WTC11 (cell line): ENCODE measurements at regions of chr3 and their contacts with region 1.

Region 1: GRCh38 chr3:131361464-131362421 is 19.8 kb upstream of the NUDT16 start:
- DNase-seq: peak; percentile 96
- ATAC-seq: peak; percentile 97
- H3K4me3 Mint-ChIP-seq: peak overlapping the region; percentile 86
- H3K27ac Mint-ChIP-seq: peak overlapping the region; percentile 97
- H3K4me1 Mint-ChIP-seq: peaks cover 27% of the 10 kb centered on the region
- H3K27me3 Mint-ChIP-seq: no peaks in the 10 kb centered on the region
- CTCF ChIP-seq: no peak

Region 2: DNA sequence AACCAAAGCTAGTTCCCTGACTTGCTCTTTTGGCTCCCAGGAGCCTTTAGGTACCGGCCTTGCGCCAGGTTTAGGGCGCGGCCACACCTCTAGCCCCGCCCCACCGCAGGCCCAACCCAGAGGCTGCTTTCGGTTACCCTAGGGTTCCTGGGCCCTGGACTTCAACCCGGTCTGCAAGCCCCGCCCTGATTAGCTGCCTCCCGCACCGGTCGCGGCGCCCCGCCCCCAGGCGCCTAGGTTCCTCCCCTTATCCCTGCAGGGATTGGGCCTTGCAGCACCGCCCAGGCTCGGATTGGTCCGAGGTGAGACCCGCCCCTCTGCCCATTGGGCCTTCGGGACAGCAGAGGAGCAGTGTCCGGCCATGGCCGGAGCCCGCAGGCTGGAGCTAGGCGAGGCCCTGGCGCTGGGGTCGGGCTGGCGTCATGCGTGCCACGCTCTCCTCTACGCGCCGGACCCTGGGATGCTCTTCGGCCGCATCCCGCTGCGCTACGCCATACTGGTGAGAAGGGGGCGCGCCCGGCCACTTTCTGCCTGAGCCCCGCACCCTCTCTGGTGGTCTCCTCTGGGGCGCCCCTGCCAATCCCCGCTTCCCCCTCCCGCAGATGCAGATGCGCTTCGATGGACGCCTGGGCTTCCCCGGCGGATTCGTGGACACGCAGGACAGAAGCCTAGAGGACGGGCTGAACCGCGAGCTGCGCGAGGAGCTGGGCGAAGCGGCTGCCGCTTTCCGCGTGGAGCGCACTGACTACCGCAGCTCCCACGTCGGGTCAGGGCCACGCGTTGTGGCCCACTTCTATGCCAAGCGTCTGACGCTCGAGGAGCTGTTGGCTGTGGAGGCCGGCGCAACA is 19.9 kb after region 1 on chr3 and contains the start of gene NUDT16:
- CTCF ChIA-PET with region 1: interaction called, 5 read pairs
- POLR2A ChIA-PET with region 1: interaction called, 31 read pairs
- DNase-seq: peak; percentile 100
- ATAC-seq: peak; percentile 97
- H3K4me3 Mint-ChIP-seq: peak within 1 kb of the TSS; percentile 94
- H3K27ac Mint-ChIP-seq: peak within 1 kb of the TSS; percentile 97
- H3K4me1 Mint-ChIP-seq: peaks cover 15% of the 10 kb centered on the region
- H3K27me3 Mint-ChIP-seq: no peaks in the 10 kb centered on the region
- CTCF ChIP-seq: no peak
- total RNA-seq, gene NUDT16: 17.2 to 20.3 TPM (median 18.6 TPM) in 3 replicates

Region 3: DNA sequence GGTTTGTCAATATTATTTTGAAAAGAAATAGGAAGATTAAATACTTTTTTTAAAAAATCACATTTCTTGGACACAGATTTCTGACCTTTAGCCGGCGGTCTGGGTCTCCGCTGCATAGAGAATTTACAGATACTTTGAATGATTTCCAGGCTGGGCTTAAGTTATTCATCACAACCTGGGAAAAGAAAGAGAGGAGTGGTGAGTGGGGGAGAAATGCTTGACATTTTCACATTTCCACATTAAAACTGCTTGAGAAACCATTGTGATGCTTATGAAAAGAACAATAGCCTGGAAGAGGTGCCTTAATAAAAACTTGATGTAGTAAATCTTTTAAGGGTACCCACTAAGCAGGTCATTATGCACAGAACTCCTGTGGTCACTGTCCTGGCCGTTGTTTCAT is 307.8 kb after region 1 on chr3:
- CTCF ChIA-PET with region 1: no interaction called
- POLR2A ChIA-PET with region 1: no interaction called
- DNase-seq: no peak
- ATAC-seq: peak; percentile 52
- H3K4me3 Mint-ChIP-seq: no peak overlapping the region
- H3K27ac Mint-ChIP-seq: 0 out of 2 replicates have a peak overlapping the region, but pooled peaks have one; percentile 20
- H3K4me1 Mint-ChIP-seq: peaks cover 23% of the 10 kb centered on the region
- H3K27me3 Mint-ChIP-seq: no peaks in the 10 kb centered on the region
- CTCF ChIP-seq: no peak